ENCODE measurements at regions of chr16 and their contacts with region 1.

Region 1: GRCh38 chr16:83449861-83450260 is 357.9 kb upstream of the HSBP1 start:
- DNase-seq: no peak
- H3K4me3 ChIP-seq: no peak overlapping the region
- H3K27ac ChIP-seq: no peak overlapping the region
- H3K4me1 ChIP-seq: no peaks in the 10 kb centered on the region
- H3K27me3 ChIP-seq: peaks cover 8% of the 10 kb centered on the region
- CTCF ChIP-seq: no peak

Region 2: GRCh38 chr16:83113317-83113716 is 336.5 kb before region 1 on chr16:
- CTCF ChIA-PET with region 1: no interaction called
- POLR2A ChIA-PET with region 1: no interaction called
- intact Hi-C with region 1: loop called (anchors 2 kb)
- DNase-seq: peak; percentile 42
- H3K4me3 ChIP-seq: no peak overlapping the region
- H3K27ac ChIP-seq: no peak overlapping the region
- H3K4me1 ChIP-seq: no peaks in the 10 kb centered on the region
- H3K27me3 ChIP-seq: peaks cover 67% of the 10 kb centered on the region
- CTCF ChIP-seq: peak; percentile 75

Region 3: GRCh38 chr16:83402967-83403366 is 46.9 kb before region 1 on chr16:
- CTCF ChIA-PET with region 1: no interaction called
- POLR2A ChIA-PET with region 1: no interaction called
- intact Hi-C with region 1: no loop called
- DNase-seq: no peak
- H3K4me3 ChIP-seq: no peak overlapping the region
- H3K27ac ChIP-seq: no peak overlapping the region
- H3K4me1 ChIP-seq: no peaks in the 10 kb centered on the region
- H3K27me3 ChIP-seq: peaks cover 23% of the 10 kb centered on the region
- CTCF ChIP-seq: no peak

Measured in A673 (cell line).